GM12878 (cell line): ENCODE measurements at regions of chr10 and their contacts with region 1.

Region 1: GRCh38 chr10:16116404-16117304 is 256.3 kb upstream of the MINDY3 start:
- DNase-seq: peak; percentile 3
- ATAC-seq: peak; percentile 73
- H3K4me3 ChIP-seq: no peak overlapping the region
- H3K27ac ChIP-seq: no peak overlapping the region
- H3K4me1 ChIP-seq: no peaks in the 10 kb centered on the region
- H3K27me3 ChIP-seq: no peaks in the 10 kb centered on the region
- CTCF ChIP-seq: peak; percentile 60 to 70 (median 65)
- EP300 ChIP-seq: no peak
- POLR2A ChIP-seq: no peak
- RAD21 ChIP-seq: peak; percentile 72

Region 2: GRCh38 chr10:16519908-16520861 is 403.5 kb after region 1 on chr10:
- CTCF ChIA-PET with region 1: no interaction called
- POLR2A ChIA-PET with region 1: no interaction called
- RAD21 ChIA-PET with region 1: no interaction called
- SMC1A ChIA-PET with region 1: no interaction called
- in situ Hi-C with region 1: no loop called
- intact Hi-C with region 1: loop called (anchors 10 kb)
- DNase-seq: no peak
- ATAC-seq: peak; percentile 27
- H3K4me3 ChIP-seq: peak overlapping the region; percentile 62; the same call in 1 of the 2 replicates
- H3K27ac ChIP-seq: no peak overlapping the region
- H3K4me1 ChIP-seq: peaks cover 8% of the 10 kb centered on the region
- H3K27me3 ChIP-seq: peaks cover 2 to 3% of the 10 kb centered on the region in 2 experiments; a peak in 1 of 4 replicates
- CTCF ChIP-seq: no peak
- EP300 ChIP-seq: no peak
- POLR2A ChIP-seq: no peak
- RAD21 ChIP-seq: no peak

Region 3: DNA sequence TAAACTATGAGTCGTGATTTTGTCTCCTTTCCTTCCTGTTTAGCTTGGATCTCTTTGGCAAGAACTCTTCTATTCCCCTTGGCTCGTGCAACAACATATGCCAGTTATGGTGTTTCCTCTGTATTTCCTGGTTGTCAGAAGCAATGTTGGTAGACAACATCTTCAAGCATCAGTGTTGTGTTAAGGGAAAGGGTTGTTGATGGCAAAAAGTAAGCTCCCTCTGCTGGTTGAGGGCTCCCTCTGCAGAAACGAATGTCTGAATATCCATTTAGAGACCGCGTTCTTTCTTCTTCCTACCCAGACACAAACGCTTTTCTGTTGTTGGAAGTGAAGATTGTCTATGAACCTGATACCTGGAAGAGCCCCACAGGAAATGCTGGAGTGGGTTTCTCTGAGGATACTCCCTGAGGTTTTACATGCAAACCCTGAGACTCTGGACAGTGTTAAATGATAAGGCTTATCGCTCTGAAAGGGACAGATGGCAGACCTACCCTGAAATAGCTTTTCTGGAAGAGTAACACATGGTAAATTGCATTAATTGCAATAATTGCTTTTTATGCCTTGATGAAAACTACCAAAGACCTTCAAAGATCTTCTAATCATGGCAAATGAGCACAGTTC is 428.6 kb after region 1 on chr10:
- CTCF ChIA-PET with region 1: interaction called, 5 read pairs
- POLR2A ChIA-PET with region 1: no interaction called
- RAD21 ChIA-PET with region 1: no interaction called
- SMC1A ChIA-PET with region 1: no interaction called
- in situ Hi-C with region 1: no loop called
- intact Hi-C with region 1: loop called (anchors 1 kb)
- DNase-seq: no peak
- ATAC-seq: peak; percentile 95
- H3K4me3 ChIP-seq: no peak overlapping the region
- H3K27ac ChIP-seq: no peak overlapping the region
- H3K4me1 ChIP-seq: no peaks in the 10 kb centered on the region
- H3K27me3 ChIP-seq: peaks cover 0 to 3% of the 10 kb centered on the region in 2 experiments; a peak in 1 of 4 replicates
- CTCF ChIP-seq: peak; percentile 72 to 85 (median 78)
- EP300 ChIP-seq: no peak
- POLR2A ChIP-seq: no peak
- RAD21 ChIP-seq: peak; percentile 61

Region 4: DNA sequence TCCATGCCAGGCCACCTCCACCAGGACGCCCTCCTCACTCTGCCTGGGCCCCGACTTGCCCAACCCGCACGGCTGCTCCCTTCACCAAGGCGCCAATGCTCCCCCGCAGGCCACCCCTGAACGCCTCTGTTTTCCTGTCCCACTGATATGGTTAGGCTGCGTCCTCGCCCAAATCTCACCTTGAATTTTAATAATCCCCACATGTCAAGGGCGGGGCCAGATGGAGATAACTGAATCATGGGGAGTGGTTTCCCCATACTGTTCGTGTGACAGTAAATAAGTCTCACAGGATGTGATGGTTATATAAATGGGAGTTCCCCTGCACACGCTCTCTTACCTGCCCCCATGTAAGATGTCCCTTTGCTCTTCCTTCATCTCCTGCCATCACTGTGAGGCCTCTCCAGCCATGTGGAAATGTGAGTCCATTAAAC is 670.7 kb after region 1 on chr10:
- CTCF ChIA-PET with region 1: no interaction called
- POLR2A ChIA-PET with region 1: no interaction called
- RAD21 ChIA-PET with region 1: no interaction called
- SMC1A ChIA-PET with region 1: no interaction called
- in situ Hi-C with region 1: loop called (anchors 10 kb)
- intact Hi-C with region 1: no loop called
- DNase-seq: no peak
- ATAC-seq: peak; percentile 94
- H3K4me3 ChIP-seq: no peak overlapping the region
- H3K27ac ChIP-seq: peak overlapping the region; percentile 83
- H3K4me1 ChIP-seq: peaks cover 19% of the 10 kb centered on the region
- H3K27me3 ChIP-seq: no peaks in the 10 kb centered on the region
- CTCF ChIP-seq: no peak
- EP300 ChIP-seq: no peak
- POLR2A ChIP-seq: no peak
- RAD21 ChIP-seq: no peak